ENCODE measurements at regions of chr12 and their contacts with region 1.

Region 1: GRCh38 chr12:41605545-41606305 is 417.6 kb downstream of the PDZRN4 start:
- H3K4me3 Mint-ChIP-seq: no peak overlapping the region
- H3K27ac Mint-ChIP-seq: no peak overlapping the region
- H3K4me1 Mint-ChIP-seq: no peaks in the 10 kb centered on the region
- H3K27me3 Mint-ChIP-seq: peaks cover 2% of the 10 kb centered on the region

Region 2: DNA sequence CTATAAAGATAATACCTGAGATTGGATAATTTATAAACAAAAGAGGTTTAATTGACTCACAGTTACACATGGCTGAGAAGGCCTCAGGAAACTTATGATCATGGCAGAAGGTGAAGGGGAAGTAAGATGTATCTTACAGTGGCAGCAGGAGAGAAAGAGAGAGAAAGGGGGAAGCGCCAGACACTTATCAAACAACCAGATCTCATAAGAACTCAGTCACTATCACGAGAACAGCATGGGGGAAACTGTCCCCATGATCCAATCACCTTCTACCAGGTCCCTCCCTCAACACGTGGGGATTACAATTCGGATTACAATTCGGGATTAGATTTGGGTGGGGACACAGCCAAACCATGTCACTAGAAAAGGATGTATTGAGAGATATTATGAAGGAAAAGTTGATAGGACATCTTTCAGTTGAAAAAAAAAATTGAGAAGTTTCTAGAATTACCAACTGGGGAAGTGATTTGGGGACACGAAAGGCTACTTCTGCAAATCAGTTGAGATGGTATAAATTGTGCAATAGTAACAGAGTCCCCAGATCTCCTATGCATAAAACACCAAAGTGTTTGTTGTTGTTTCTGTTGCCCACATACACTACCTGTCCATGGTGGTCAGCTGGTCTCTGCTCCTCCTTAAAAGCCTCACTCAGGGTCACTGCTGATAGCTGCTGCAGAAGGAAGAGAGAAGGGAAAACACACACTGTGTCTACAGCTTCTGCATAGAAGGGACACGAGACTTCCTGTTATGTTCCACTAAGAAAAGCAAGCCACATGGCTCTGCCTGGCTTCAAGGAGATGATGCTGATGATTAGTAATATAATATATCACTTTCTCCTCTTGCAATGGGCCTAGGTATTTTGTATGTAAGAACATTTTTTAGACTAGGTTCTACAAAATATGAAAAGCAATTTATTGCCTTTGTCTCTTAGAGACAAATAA is 47.9 kb after region 1 on chr12:
- intact Hi-C with region 1: loop called (anchors 10 kb)
- H3K4me3 Mint-ChIP-seq: no peak overlapping the region
- H3K27ac Mint-ChIP-seq: peak overlapping the region; percentile 79
- H3K4me1 Mint-ChIP-seq: peaks cover 22% of the 10 kb centered on the region
- H3K27me3 Mint-ChIP-seq: no peaks in the 10 kb centered on the region

Measured in dendritic cell treated with granulocyte-macrophage colony-stimulating factor and Interleukin-4, amounts not matched to agents 40 ng/mL and 50 ng/mL, for 4 days (primary cell).